BJ (cell line): ENCODE measurements at regions of chr20 and their contacts with region 1.

Region 1: GRCh38 chr20:10171864-10172751 is 46.5 kb upstream of the SNAP25 start:
- DNase-seq: no peak
- H3K4me3 ChIP-seq: peak overlapping the region; percentile 46
- H3K27me3 ChIP-seq: peaks cover 2% of the 10 kb centered on the region; the same call in 1 of the 2 replicates
- CTCF ChIP-seq: no peak

Region 2: GRCh38 chr20:10060226-10060625 is 111.9 kb before region 1 on chr20:
- CTCF ChIA-PET with region 1: no interaction called
- POLR2A ChIA-PET with region 1: no interaction called
- DNase-seq: no peak
- H3K4me3 ChIP-seq: no peak overlapping the region
- H3K27me3 ChIP-seq: 0 out of 2 replicates have a peak, but pooled peaks cover 3% of the 10 kb centered on the region
- CTCF ChIP-seq: no peak

Region 3: DNA sequence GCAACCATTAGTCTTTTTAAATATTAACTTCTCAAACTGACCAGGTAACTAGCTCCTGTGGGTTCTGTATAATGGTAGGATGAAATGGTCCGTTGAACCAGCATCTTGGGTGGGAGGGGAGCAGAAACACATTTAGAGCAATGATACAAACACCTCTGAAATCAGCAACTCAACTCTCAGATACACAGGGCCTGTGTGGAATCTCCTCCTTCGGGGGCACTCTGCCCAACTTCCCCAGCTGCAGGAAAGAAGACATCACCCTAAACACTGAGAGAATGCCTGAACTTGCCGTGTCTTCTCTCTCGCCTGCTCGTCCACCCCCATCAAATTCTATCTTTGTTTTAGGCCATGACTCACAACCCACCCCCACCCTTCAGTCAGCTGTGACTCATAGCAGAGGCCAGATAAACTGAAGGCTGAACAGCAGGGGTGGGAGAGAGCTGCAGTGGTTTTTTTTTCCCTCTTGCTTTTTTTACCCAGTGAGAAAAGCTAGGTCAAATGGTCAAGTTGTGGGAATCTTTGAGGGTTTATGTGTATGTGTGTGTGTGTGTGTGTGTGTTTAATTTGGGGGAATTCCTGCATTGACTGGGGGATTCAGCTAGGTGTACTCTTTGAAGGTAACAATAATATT is 1095.1 kb after region 1 on chr20:
- CTCF ChIA-PET with region 1: no interaction called
- POLR2A ChIA-PET with region 1: interaction called, 11 read pairs
- DNase-seq: peak; percentile 74
- H3K4me3 ChIP-seq: no peak overlapping the region
- H3K27me3 ChIP-seq: no peaks in the 10 kb centered on the region
- CTCF ChIP-seq: peak; percentile 37; the same call in 1 of the 2 replicates